Calu3 (cell line): ENCODE measurements at regions of chr1 and their contacts with region 1.

Region 1: GRCh38 chr1:96926179-96926578 is 204.6 kb downstream of the PTBP2 start:
- DNase-seq: peak; percentile 0
- H3K4me3 Mint-ChIP-seq: no peak overlapping the region
- H3K27ac Mint-ChIP-seq: no peak overlapping the region
- H3K4me1 Mint-ChIP-seq: no peaks in the 10 kb centered on the region
- H3K27me3 Mint-ChIP-seq: no peaks in the 10 kb centered on the region
- CTCF ChIP-seq: no peak

Region 2: DNA sequence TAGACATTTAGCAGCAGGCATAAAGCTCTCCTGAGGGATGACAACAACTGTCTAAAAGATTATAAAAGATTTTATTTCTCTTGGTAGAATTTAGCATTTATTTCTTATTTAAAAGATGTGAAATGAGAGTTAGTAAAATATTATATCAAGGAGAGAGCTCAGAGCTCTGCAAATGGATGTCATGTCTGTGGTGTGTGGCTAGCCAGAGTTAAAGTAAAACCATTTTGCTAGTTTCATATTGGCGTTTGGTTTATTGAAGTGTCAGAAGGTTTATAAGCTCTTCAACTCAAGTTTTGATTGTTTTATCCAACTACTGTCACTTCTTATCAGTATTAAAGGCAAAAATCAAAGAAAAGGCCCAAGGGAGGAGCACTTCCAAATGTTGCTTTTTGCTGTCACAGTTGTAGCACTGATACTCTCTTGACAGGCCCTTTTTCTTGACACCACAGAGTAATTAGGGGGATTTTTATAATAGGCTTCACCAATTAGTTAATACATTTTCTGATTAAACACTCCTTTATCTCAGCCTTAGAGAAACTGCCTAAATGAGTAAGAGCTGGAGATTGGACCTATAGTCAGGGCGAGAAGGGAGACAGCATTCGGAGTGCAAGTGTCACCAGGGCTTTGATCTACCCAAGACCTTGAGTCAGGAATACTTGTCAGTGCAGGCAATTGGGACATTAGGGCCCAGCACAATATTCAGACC is 29.3 kb after region 1 on chr1:
- CTCF ChIA-PET with region 1: no interaction called
- intact Hi-C with region 1: loop called (anchors 1 kb)
- DNase-seq: no peak
- H3K4me3 Mint-ChIP-seq: no peak overlapping the region
- H3K27ac Mint-ChIP-seq: no peak overlapping the region
- H3K4me1 Mint-ChIP-seq: peaks cover 18% of the 10 kb centered on the region
- H3K27me3 Mint-ChIP-seq: no peaks in the 10 kb centered on the region
- CTCF ChIP-seq: no peak

Region 3: GRCh38 chr1:97108179-97108578 is 182.0 kb after region 1 on chr1:
- CTCF ChIA-PET with region 1: no interaction called
- intact Hi-C with region 1: no loop called
- DNase-seq: no peak
- H3K4me3 Mint-ChIP-seq: no peak overlapping the region
- H3K27ac Mint-ChIP-seq: no peak overlapping the region
- H3K4me1 Mint-ChIP-seq: no peaks in the 10 kb centered on the region
- H3K27me3 Mint-ChIP-seq: no peaks in the 10 kb centered on the region
- CTCF ChIP-seq: no peak